Breast epithelium (tissue), 4 donors: ENCODE measurements at regions of chr5 and their contacts with region 1.

Region 1: GRCh38 chr5:120568711-120569110 is 104.6 kb downstream of the PRR16 start:
- DNase-seq: no peak
- H3K4me3 ChIP-seq: no peak overlapping the region
- H3K27ac ChIP-seq: no peak overlapping the region
- H3K4me1 ChIP-seq: no peaks in the 10 kb centered on the region
- H3K27me3 ChIP-seq: no peaks in the 10 kb centered on the region
- CTCF ChIP-seq: no peak
- POLR2A ChIP-seq: no peak

Region 2: GRCh38 chr5:120555345-120555744 is 13.4 kb before region 1 on chr5:
- intact Hi-C with region 1: loop called (anchors 1 kb)
- DNase-seq: no peak
- H3K4me3 ChIP-seq: no peak overlapping the region
- H3K27ac ChIP-seq: no peak overlapping the region
- H3K4me1 ChIP-seq: no peaks in the 10 kb centered on the region
- H3K27me3 ChIP-seq: no peaks in the 10 kb centered on the region
- CTCF ChIP-seq: no peak
- POLR2A ChIP-seq: no peak

Region 3: GRCh38 chr5:120604888-120605287 is 36.2 kb after region 1 on chr5:
- intact Hi-C with region 1: no loop called
- DNase-seq: no peak
- H3K4me3 ChIP-seq: no peak overlapping the region
- H3K27ac ChIP-seq: no peak overlapping the region
- H3K4me1 ChIP-seq: no peaks in the 10 kb centered on the region
- H3K27me3 ChIP-seq: no peaks in the 10 kb centered on the region
- CTCF ChIP-seq: no peak
- POLR2A ChIP-seq: no peak